ENCODE measurements at regions of chr6 and their contacts with region 1.

Region 1: GRCh38 chr6:157756708-157757429 is 66.2 kb upstream of the SNX9 start:
- DNase-seq: peak; percentile 65
- H3K4me3 Mint-ChIP-seq: no peak overlapping the region
- H3K27ac Mint-ChIP-seq: peak overlapping the region; percentile 92
- H3K4me1 Mint-ChIP-seq: peaks cover 85% of the 10 kb centered on the region
- H3K27me3 Mint-ChIP-seq: peaks cover 6% of the 10 kb centered on the region

Region 2: GRCh38 chr6:157667211-157668008 is 89.5 kb before region 1 on chr6:
- intact Hi-C with region 1: loop called (anchors 5 kb)
- DNase-seq: peak; percentile 30
- H3K4me3 Mint-ChIP-seq: no peak overlapping the region
- H3K27ac Mint-ChIP-seq: peak overlapping the region; percentile 41
- H3K4me1 Mint-ChIP-seq: peaks cover 12% of the 10 kb centered on the region
- H3K27me3 Mint-ChIP-seq: peaks cover 10% of the 10 kb centered on the region

Region 3: GRCh38 chr6:157770946-157771345 is 14.1 kb after region 1 on chr6:
- intact Hi-C with region 1: loop called (anchors 2 kb)
- DNase-seq: no peak
- H3K4me3 Mint-ChIP-seq: no peak overlapping the region
- H3K27ac Mint-ChIP-seq: no peak overlapping the region
- H3K4me1 Mint-ChIP-seq: peaks cover 41% of the 10 kb centered on the region
- H3K27me3 Mint-ChIP-seq: peaks cover 23% of the 10 kb centered on the region

Region 4: GRCh38 chr6:157823528-157824370 is 66.9 kb after region 1 on chr6:
- intact Hi-C with region 1: loop called (anchors 1 kb)
- DNase-seq: peak; percentile 72
- H3K4me3 Mint-ChIP-seq: peak overlapping the region; percentile 93
- H3K27ac Mint-ChIP-seq: peak overlapping the region; percentile 97
- H3K4me1 Mint-ChIP-seq: peaks cover 47% of the 10 kb centered on the region
- H3K27me3 Mint-ChIP-seq: peaks cover 34% of the 10 kb centered on the region

Region 5: DNA sequence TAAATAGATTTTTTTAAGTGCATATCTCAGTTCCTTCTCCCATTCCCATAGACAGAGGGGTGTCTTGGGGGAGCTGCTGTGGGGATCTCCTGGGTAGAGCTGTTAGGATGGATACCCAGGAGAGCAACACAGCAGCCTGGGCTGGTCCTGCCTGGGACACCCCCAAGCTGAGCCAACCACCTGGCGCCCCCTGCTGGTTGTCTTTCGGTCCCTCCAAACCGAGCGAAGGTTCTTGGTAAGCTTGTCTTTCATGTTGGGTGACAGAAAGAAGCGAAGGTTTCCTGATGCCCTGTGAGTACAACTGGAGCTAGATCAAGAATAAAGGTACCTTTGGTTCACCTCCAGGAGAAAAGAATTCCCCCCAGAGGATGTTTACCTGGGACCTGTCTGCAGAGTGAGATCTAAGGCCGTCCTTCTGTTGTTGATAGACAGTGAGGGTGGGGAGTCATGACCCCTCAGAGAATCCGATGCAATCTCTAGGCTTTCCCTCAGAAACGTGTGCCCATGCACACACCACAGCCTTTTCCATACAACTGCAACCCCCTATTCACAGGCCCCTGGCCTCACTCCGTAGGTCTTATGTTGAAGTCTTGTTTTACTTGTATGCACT is 117.0 kb after region 1 on chr6:
- intact Hi-C with region 1: loop called (anchors 1 kb)
- DNase-seq: peak; percentile 69
- H3K4me3 Mint-ChIP-seq: no peak overlapping the region
- H3K27ac Mint-ChIP-seq: no peak overlapping the region
- H3K4me1 Mint-ChIP-seq: peaks cover 29% of the 10 kb centered on the region
- H3K27me3 Mint-ChIP-seq: no peaks in the 10 kb centered on the region

Region 6: DNA sequence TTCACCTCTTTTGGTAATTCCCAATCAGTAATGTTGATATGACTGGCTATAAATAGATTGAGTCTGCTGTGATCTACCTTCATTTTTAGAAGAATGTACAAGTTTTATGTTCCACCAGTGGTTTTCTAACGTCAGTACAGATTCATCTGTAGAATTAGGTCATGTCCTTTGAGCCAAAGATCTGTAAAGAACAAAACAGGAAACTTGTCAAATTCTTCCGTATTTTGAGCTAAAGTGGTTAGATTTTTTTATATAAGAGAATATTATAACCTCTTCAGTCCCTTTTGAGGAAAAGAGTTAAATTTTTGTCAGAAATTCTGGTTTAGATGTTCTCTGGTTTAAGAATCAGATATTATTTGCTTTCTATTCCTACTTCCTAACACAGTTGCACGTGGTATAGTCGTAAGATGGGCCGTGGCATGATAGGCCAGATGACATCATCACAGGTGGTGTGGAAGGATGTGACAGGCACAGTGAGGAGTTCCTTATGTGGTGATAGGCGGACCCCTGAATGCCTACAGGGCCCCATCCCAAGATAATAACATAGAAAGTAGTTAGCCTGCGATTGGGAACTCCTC is 128.4 kb after region 1 on chr6:
- intact Hi-C with region 1: loop called (anchors 1 kb)
- DNase-seq: peak; percentile 60
- H3K4me3 Mint-ChIP-seq: peak overlapping the region; percentile 45
- H3K27ac Mint-ChIP-seq: peak overlapping the region; percentile 88
- H3K4me1 Mint-ChIP-seq: peaks cover 79% of the 10 kb centered on the region
- H3K27me3 Mint-ChIP-seq: no peaks in the 10 kb centered on the region

Region 7: DNA sequence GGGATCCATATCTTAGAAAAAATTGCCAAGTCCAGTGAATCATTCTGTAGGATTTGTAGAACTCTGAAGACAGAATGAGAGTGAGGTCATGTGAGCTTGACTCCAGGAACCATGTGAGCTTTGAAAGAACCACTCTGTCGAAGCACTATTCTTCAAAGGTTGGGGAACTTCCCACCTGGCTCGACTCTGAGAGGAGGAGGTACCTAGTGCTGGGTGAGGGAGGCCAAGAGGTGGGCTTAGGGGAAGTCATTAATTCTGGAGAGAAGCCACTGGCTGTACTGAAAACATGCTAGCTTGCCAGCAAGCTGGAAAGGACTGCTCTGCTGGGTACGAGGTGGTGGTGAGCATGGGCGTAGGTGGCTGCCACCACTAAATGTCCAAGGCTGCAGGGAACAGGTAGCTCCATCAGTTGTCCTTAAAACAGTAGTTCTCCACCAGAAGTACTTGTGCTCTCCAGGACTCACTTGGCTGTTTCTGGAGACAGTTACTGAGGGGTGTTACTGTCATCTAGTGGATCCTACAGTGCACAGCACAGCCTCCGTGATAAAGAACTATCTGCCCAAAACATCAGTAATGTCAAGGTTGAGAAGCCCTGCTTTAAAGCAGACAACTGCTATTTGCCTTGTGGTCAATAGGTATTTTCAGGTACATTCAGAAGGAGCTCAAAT is 190.1 kb after region 1 on chr6:
- intact Hi-C with region 1: loop called (anchors 2 kb)
- DNase-seq: no peak
- H3K4me3 Mint-ChIP-seq: no peak overlapping the region
- H3K27ac Mint-ChIP-seq: peak overlapping the region; percentile 24
- H3K4me1 Mint-ChIP-seq: peaks cover 32% of the 10 kb centered on the region
- H3K27me3 Mint-ChIP-seq: peaks cover 9% of the 10 kb centered on the region